Head of caudate nucleus (tissue), 42 donors: ENCODE measurements at regions of chr3 and their contacts with region 1.

Region 1: DNA sequence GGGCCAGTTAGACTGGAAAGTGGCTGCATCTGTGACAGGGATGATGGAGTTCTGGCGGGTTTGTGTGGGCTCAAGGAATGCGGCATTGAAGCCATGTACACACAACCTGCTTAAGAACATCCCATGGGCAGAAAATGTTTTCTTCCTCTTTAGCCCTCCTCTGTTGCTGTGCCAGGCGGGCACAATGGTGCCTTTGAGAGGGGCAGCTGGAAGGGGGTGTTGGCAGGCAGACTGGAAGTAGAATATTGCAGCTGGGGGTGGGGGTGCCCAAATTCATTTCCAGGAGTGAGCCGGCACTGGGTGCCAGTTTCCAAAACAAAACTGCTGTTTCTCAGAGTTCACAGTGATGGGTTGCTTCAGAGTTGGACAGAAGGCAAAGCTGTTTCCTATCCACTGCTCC is 91.8 kb upstream of the ETV5 start:
- DNase-seq: peak; percentile 70 to 95 (median 86)

Region 2: DNA sequence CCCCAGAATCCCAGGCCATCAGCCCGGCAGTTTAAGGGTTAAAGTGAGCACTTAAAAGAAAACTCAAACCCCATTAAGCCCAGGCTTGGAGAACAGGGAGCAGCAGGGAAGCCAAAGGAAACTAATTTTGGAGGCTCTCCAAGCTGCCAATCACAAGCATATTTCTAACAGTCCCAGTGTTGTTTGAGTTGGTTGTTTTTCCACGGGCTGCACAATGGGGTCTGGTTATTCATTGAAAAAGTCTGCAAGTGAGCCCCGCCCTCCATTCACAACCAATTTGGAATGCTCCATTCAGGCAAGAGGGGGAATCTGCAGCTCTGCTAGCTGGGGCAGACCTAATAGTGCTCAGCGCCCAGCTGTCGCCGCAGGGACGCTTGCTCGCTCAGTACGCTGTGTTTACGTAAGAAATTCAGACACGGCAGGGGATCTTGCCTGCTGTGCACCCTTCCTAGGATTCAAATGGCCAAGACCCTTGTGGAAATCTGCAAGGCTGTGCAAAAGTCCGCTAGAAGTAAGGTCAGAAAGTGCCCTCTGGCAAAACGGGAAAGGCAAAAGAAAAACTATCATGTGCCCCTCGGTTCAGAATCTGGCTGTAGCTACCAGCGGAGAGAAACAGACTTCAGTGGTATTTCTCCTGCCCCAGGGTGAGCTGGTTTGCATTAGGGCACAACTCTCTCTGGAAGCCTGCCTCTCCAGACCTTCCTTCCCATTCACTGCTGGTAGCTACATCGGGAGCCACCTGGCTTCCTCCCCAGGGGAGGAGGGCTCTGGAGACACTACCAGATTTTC is 102.9 kb before region 1 on chr3:
- intact Hi-C with region 1: loop called (anchors 1 kb)
- DNase-seq: peak; percentile 63 to 96 (median 88)